Activated CD4-positive, alpha-beta memory T cell treated with anti-CD3 and anti-CD28 coated beads, Interleukin-2, amount 10 ng/mL, durations not matched to agents 7 days and 5 days (primary cell): ENCODE measurements at regions of chr2 and their contacts with region 1.

Region 1: GRCh38 chr2:25991965-25992364 is 9.7 kb upstream of the KIF3C start:
- DNase-seq: no peak
- H3K4me3 Mint-ChIP-seq: no peak overlapping the region
- H3K27ac Mint-ChIP-seq: no peak overlapping the region
- H3K4me1 Mint-ChIP-seq: peaks cover 28% of the 10 kb centered on the region
- H3K27me3 Mint-ChIP-seq: peaks cover 12% of the 10 kb centered on the region

Region 2: DNA sequence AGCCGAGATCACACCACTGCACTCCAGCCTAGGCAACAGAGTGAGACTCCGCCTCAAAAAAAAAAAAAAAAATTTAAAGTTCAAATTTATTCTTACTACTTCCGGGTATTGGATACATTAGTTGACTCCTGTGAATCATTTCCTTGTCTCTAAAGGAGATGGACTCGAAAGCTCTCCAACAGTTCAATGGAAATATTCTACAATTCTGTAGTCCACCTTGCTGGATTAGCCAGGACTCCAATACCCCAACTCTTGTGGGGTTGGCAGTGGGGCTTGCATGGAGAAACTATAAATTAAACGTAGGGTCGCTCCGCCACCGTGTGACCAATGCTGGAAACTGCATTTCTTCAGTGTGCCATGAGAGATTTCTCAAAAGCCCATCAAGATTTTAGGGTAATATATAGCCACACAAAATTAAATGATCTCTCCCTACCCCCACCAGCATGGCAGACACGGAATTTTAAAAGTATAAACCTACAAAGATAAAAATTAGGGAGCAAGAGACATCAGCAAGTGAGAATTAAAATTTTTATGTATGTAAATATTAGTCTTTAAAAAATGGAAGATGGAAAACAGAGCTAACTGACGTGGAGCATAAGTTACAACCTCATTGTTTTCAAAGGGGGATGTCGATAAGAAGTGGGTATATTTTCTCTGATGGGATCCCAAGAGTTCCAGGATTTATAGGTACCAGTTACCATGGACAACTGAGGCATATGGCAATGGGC is 153.2 kb after region 1 on chr2:
- CTCF ChIA-PET with region 1: interaction called, 20 read pairs
- POLR2A ChIA-PET with region 1: no interaction called
- DNase-seq: peak; percentile 74
- H3K4me3 Mint-ChIP-seq: no peak overlapping the region
- H3K27ac Mint-ChIP-seq: no peak overlapping the region
- H3K4me1 Mint-ChIP-seq: no peaks in the 10 kb centered on the region
- H3K27me3 Mint-ChIP-seq: peaks cover 10% of the 10 kb centered on the region